Stomach (tissue), 19 donors: ENCODE measurements at regions of chr2 and their contacts with region 1.

Region 1: GRCh38 chr2:209348433-209348832 is 75.4 kb upstream of the MAP2 start:
- DNase-seq: no peak
- H3K4me3 ChIP-seq: no peak overlapping the region
- H3K27ac ChIP-seq: no peak overlapping the region
- H3K4me1 ChIP-seq: no peaks in the 10 kb centered on the region
- H3K27me3 ChIP-seq: no peaks in the 10 kb centered on the region
- CTCF ChIP-seq: no peak
- EP300 ChIP-seq: no peak
- POLR2A ChIP-seq: no peak

Region 2: DNA sequence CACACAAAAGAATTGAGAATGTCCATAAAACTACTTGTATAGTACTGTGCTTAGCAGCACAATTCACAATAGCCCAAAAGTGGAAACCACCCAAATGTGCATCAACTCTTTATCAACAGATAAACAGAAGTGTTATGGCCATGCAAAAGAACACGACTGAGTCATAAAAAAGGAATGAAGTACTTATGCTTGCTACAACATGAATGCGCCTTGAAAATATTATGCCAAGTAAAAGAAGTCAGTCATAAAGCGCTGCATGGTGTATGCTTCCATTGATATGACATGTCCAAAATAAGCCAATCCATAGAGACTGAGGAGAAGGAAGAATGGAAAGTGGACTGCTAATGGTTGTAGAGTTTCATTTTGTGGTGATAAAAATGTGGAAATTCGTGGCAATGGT is 63.3 kb after region 1 on chr2:
- intact Hi-C with region 1: loop called (anchors 10 kb)
- DNase-seq: no peak
- H3K4me3 ChIP-seq: no peak overlapping the region
- H3K27ac ChIP-seq: no peak overlapping the region
- H3K4me1 ChIP-seq: no peaks in the 10 kb centered on the region
- H3K27me3 ChIP-seq: no peaks in the 10 kb centered on the region
- CTCF ChIP-seq: no peak
- EP300 ChIP-seq: no peak
- POLR2A ChIP-seq: no peak